GM12878 (cell line): ENCODE measurements at regions of chr6 and their contacts with region 1.

Region 1: GRCh38 chr6:3157131-3157927 is at the start of gene TUBB2A:
- DNase-seq: no peak
- ATAC-seq: peak; percentile 87
- H3K4me3 ChIP-seq: peak within 1 kb of the TSS; percentile 80
- H3K27ac ChIP-seq: 0 out of 2 replicates have a peak within 1 kb of the TSS, but pooled peaks have one; percentile 25
- H3K4me1 ChIP-seq: no peaks in the 10 kb centered on the region; the same call in 1 of the 2 replicates
- H3K27me3 ChIP-seq: 0 out of 4 replicates have a peak, but pooled peaks cover 0 to 2% of the 10 kb centered on the region in 2 experiments
- CTCF ChIP-seq: peak in 2 of 3 experiments; percentile 27 to 48; a peak in 5 of 6 replicates
- EP300 ChIP-seq: no peak
- POLR2A ChIP-seq: peak; percentile 92
- RAD21 ChIP-seq: no peak
- polyA plus RNA-seq, gene TUBB2A: 2.2 to 6.0 TPM

Region 2: GRCh38 chr6:3176562-3177355 is 19.4 kb after region 1 on chr6:
- CTCF ChIA-PET with region 1: no interaction called
- POLR2A ChIA-PET with region 1: no interaction called
- RAD21 ChIA-PET with region 1: no interaction called
- SMC1A ChIA-PET with region 1: no interaction called
- in situ Hi-C with region 1: no loop called
- intact Hi-C with region 1: loop called (anchors 1 kb)
- DNase-seq: no peak
- ATAC-seq: peak; percentile 38
- H3K4me3 ChIP-seq: no peak overlapping the region
- H3K27ac ChIP-seq: no peak overlapping the region
- H3K4me1 ChIP-seq: no peaks in the 10 kb centered on the region
- H3K27me3 ChIP-seq: no peaks in the 10 kb centered on the region
- CTCF ChIP-seq: no peak
- EP300 ChIP-seq: no peak
- POLR2A ChIP-seq: no peak
- RAD21 ChIP-seq: no peak